ENCODE measurements at regions of chr17 and their contacts with region 1.

Region 1: DNA sequence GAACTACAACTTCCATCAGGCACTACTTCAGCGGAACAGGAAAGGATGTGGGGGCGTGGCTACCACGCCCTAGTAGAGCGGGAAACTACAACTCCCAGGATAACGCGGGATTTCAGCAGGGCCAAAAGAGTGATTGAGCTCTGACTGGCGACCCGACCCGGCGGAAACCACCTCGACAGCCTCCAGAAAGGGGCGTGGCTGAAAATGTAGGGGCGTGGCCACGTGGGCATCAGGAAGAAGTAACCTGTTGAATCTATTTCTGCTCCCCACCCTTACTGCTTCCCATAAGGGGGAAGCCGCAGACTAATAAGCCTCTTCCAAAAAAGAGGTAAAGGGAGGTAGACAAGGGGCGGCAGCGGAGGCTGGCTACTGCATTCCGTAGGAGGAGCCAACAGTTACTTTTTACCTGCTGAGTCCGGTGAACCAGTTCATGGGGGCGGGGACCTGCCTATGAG is at the start of gene TMEM102:
- DNase-seq: peak; percentile 99
- ATAC-seq: peak; percentile 81
- H3K4me3 Mint-ChIP-seq: peak within 1 kb of the TSS; percentile 86
- H3K27ac Mint-ChIP-seq: peak within 1 kb of the TSS; percentile 97
- H3K4me1 Mint-ChIP-seq: peaks cover 42% of the 10 kb centered on the region
- H3K27me3 Mint-ChIP-seq: peaks cover 12% of the 10 kb centered on the region
- total RNA-seq, gene TMEM102: 13.9 to 16.7 TPM

Region 2: GRCh38 chr17:7177196-7177953 is 257.9 kb before region 1 on chr17:
- CTCF ChIA-PET with region 1: no interaction called
- DNase-seq: peak; percentile 75
- ATAC-seq: peak; percentile 73
- H3K4me3 Mint-ChIP-seq: peak overlapping the region; percentile 53
- H3K27ac Mint-ChIP-seq: no peak overlapping the region
- H3K4me1 Mint-ChIP-seq: peaks cover 9% of the 10 kb centered on the region
- H3K27me3 Mint-ChIP-seq: peaks cover 14% of the 10 kb centered on the region

Region 3: DNA sequence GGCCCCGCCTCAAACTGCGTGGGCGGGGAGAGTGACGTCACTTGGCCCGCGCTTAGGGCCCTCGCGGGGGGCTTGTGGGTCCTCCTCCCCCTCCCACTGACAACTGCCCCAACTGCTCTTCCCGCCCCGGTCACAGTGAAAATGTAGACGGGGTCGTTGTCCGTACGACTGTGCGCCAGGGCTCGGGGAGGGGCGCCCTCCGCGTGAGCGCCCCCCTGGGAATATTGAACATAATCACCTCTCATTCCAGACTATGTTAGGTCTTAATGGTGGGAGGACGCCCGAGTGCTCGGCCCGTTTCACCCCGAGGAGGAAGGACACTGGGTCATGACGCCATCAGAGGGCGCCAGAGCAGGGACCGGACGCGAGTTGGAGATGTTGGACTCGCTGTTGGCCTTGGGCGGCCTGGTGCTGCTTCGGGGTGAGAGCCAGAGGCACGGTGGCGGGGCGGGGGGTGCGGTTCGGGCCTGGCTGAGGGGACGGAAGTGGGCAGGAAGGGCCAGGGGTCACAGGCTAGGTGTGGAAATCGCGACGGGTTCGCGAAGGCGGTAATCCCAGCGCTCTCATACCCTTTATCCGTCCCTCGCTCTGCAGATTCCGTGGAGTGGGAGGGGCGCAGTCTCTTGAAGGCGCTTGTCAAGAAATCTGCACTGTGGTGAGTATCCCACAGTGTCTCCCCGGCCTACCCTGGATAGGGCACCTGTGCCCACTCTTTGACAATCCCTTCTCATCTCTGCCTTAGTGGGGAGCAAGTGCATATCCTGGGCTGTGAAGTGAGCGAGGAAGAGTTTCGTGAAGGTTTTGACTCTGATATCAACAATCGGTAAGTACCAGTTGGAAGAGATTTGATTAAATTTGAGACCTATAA is 182.8 kb before region 1 on chr17 and contains the start of gene ELP5:
- CTCF ChIA-PET with region 1: no interaction called
- DNase-seq: peak; percentile 96
- ATAC-seq: peak; percentile 73
- H3K4me3 Mint-ChIP-seq: peak within 1 kb of the TSS; percentile 91
- H3K27ac Mint-ChIP-seq: peak within 1 kb of the TSS; percentile 99
- H3K4me1 Mint-ChIP-seq: peaks cover 41% of the 10 kb centered on the region
- H3K27me3 Mint-ChIP-seq: no peaks in the 10 kb centered on the region
- total RNA-seq, gene ELP5: 56.5 to 70.4 TPM

Region 4: GRCh38 chr17:7336240-7337175 is 98.7 kb before region 1 on chr17 and contains the start of gene ACAP1:
- CTCF ChIA-PET with region 1: interaction called, 15 read pairs
- DNase-seq: peak; percentile 96
- ATAC-seq: peak; percentile 95
- H3K4me3 Mint-ChIP-seq: peak within 1 kb of the TSS; percentile 93
- H3K27ac Mint-ChIP-seq: peak within 1 kb of the TSS; percentile 96
- H3K4me1 Mint-ChIP-seq: peaks cover 48% of the 10 kb centered on the region
- H3K27me3 Mint-ChIP-seq: no peaks in the 10 kb centered on the region
- total RNA-seq, gene ACAP1: 594 to 712 TPM

Region 5: DNA sequence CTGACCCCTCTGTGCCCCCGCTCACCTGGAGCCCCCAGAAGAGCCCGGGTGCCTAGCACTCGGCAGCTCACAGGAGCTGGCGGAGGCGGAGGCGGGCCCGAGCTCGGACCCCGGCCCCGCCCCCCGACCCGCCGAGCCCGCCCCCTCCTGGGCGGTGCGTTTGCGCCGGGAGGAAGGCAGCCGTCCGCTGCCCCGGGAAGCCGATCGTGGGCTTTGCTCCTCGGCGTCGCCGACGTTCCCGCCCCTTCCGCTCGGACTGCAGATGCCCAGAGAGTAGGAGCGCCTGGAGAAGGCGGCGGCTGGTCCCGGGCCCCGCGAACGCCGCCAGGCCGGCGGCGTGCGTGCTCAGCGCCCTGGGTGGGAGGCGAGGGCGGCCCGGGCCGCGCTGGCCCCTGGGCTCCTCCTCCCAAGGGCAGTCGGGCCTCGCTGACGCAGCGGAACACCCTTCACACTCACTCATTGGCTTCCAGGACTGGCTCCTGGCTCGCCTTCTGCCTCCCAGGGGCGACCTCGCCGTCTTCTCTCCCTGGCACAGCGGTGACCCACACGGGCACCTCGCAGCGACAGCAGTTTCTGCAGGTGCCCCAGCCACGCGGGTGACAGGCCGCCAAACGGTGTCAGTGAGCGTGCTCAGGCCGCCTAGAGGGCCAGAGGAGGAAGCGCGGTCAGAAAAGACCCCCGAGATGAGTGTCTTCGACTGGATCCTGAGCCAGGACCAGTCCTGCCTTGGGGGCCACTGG is 40.6 kb before region 1 on chr17 and contains the start of gene PLSCR3:
- CTCF ChIA-PET with region 1: interaction called, 16 read pairs
- DNase-seq: peak; percentile 86
- ATAC-seq: peak; percentile 92
- H3K4me3 Mint-ChIP-seq: peak within 1 kb of the TSS; percentile 94
- H3K27ac Mint-ChIP-seq: peak within 1 kb of the TSS; percentile 85
- H3K4me1 Mint-ChIP-seq: peaks cover 18% of the 10 kb centered on the region
- H3K27me3 Mint-ChIP-seq: no peaks in the 10 kb centered on the region
- total RNA-seq, gene PLSCR3: 65.5 to 74.2 TPM

Region 6: GRCh38 chr17:7454980-7455379 is 19.7 kb after region 1 on chr17:
- CTCF ChIA-PET with region 1: interaction called, 51 read pairs
- DNase-seq: no peak
- ATAC-seq: no peak
- H3K4me3 Mint-ChIP-seq: peak overlapping the region; percentile 99
- H3K27ac Mint-ChIP-seq: peak overlapping the region; percentile 99
- H3K4me1 Mint-ChIP-seq: peaks cover 23% of the 10 kb centered on the region
- H3K27me3 Mint-ChIP-seq: no peaks in the 10 kb centered on the region

Region 7: DNA sequence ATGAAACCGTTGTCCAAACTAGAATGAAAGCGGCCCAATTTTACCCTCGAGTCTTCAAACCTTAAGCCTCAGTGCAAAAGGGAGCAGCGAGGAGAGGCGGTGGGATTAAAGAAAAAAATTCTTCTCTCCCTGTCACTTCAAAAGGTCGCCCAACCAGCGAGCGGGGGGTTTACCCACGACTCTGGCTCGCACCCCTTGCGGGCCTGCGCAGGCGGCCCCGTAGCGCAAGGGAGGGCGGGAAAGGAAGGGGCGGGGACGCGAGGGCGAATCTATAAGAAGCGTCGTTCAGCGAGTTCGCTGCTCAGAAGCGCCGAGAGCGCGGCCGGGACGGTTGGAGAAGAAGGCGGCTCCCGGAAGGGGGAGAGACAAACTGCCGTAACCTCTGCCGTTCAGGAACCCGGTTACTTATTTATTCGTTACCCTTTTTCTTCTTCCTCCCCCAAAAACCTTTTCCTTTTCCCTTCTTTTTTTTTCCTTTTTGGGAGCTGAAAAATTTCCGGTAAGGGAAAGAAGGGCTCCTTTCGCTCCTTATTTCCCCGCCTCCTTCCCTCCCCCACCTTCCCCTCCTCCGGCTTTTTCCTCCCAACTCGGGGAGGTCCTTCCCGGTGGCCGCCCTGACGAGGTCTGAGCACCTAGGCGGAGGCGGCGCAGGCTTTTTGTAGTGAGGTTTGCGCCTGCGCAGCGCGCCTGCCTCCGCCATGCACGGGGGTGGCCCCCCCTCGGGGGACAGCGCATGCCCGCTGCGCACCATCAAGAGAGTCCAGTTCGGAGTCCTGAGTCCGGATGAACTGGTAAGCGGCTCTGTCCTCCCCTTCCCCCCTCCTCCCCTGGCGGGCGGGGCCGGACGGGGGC is 49.0 kb after region 1 on chr17 and contains the start of gene POLR2A:
- CTCF ChIA-PET with region 1: interaction called, 41 read pairs
- DNase-seq: peak; percentile 98
- ATAC-seq: peak; percentile 69
- H3K4me3 Mint-ChIP-seq: peak within 1 kb of the TSS; percentile 90
- H3K27ac Mint-ChIP-seq: peak within 1 kb of the TSS; percentile 100
- H3K4me1 Mint-ChIP-seq: peaks cover 67% of the 10 kb centered on the region
- H3K27me3 Mint-ChIP-seq: no peaks in the 10 kb centered on the region
- total RNA-seq, gene POLR2A: 198 to 228 TPM

Region 8: DNA sequence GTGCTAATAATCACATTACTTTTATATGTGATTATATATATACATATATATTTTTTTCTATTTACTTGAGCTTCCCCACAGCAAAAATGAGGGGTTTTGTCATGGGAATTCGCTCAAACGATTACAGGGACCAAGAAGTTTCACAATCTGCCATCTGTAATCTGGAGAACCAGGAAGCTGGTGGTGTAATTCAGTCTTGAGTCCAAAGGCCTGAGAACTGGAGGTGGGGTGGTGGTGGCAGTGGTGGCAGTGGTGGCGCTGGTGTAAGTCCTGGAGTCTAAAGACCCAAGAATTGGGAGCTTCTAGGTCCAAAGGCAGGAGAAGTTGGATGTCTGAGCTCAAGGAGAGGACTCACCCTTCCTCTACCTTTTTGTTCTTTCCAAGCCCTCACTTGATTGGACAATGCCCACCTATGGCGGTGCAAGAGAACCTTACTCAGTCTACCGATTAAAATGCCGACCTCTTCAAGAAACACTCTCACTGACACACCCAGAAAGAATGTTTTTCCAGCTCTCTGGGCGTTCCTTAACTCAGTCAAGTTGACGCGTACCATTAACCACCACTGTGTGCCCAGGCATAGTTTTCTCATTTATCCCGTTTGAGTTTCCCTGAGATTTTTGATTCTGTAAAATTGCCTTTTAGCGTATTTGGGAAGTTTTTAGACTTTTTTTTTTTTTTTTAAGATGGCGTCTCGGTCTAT is 80.8 kb after region 1 on chr17:
- CTCF ChIA-PET with region 1: interaction called, 10 read pairs
- DNase-seq: no peak
- ATAC-seq: no peak
- H3K4me3 Mint-ChIP-seq: no peak overlapping the region
- H3K27ac Mint-ChIP-seq: no peak overlapping the region
- H3K4me1 Mint-ChIP-seq: no peaks in the 10 kb centered on the region
- H3K27me3 Mint-ChIP-seq: no peaks in the 10 kb centered on the region

Region 9: DNA sequence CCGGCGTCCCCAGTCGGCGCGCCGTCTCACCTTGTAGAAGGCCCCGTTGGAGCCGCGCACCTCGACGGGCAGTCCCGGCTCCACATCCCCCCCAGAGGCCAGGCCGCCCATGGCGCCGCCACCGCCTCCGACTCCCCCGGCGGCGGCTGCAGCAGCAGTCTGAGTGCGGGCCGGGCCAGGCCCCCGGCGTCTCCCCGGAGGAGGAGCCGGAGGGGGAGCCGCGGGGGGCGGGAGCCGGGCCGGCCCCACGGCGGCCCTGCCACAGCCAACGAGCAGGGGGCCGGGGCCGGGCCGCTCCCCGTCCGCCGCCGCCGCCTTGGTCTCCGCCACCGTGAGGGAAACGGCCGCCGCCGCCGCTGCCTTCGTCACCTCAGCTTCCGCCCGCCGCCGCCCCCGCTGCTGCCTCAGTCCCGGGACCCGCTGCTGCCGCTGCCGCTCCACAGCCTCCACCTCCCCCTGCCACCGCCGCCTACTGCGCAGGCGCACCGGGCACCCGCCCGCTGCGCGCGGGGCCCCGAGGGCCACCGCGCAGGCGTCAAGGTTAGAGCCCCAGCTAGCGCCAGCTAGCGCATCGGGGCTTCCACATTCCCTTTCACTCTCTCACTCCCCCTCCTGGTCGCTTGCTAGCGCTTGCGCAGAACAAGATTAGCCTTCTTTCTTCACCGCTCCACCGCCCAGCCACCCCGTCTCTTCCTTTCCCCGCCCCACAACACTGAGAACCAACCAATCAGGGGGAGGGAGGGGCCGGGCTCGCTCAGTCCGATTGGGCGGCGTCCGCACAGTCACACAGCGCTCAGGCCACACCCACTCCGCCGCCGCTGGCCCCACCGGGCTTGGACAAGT is 179.4 kb after region 1 on chr17 and contains the start of gene FXR2:
- CTCF ChIA-PET with region 1: interaction called, 10 read pairs
- DNase-seq: peak; percentile 100
- ATAC-seq: peak; percentile 95
- H3K4me3 Mint-ChIP-seq: peak within 1 kb of the TSS; percentile 77
- H3K27ac Mint-ChIP-seq: peak within 1 kb of the TSS; percentile 87
- H3K4me1 Mint-ChIP-seq: peaks cover 30% of the 10 kb centered on the region
- H3K27me3 Mint-ChIP-seq: no peaks in the 10 kb centered on the region
- total RNA-seq, gene FXR2: 30.7 to 40.5 TPM

Region 10: DNA sequence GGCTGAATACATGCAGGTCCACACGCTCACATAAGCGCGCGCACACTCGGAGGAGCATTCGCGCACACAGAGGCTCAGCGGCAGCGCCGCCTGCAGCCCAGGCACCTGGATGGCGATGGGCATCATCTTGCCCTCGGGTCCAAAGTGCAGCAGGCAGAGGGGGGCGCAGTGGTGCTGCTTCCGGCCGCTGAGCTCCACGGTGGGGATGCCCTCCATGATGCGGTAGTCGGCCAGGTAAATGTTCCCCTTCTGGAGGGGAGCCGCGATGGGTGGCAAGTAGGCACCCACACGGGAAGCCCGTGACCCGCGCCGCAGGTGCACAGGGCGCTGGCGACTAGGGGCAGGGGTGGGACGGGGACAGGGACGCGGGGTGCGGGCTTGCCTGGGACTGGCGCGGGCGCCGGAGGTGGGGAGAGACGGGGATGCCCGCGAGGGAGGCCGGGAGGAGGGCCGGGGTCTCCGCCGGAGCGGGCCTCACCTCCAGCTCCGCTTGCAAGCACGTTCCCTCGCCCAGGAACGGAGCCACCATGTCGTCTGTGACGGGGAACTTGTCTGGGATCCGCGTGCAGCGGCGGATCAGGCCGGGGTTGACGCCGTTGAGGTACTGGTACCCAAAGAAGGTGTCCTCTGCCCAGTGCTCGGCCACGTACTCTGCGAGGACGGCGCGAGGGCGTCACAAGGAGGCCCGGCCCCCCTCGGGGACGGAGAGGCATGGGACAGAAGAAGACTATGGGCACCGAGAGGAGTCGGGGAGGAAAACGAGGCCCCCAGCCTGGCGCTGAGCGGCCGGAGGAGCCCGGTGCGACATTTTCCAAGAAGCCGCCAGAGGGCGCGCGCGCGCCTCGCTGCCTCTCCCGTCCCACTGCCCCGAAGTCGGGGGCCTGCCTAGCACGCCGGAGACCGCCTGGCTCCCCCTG is 644.3 kb after region 1 on chr17:
- CTCF ChIA-PET with region 1: no interaction called
- DNase-seq: peak; percentile 85
- ATAC-seq: peak; percentile 86
- H3K4me3 Mint-ChIP-seq: peak overlapping the region; percentile 87
- H3K27ac Mint-ChIP-seq: peak overlapping the region; percentile 81
- H3K4me1 Mint-ChIP-seq: peaks cover 12% of the 10 kb centered on the region
- H3K27me3 Mint-ChIP-seq: peaks cover 20% of the 10 kb centered on the region

Measured in activated CD8-positive, alpha-beta memory T cell treated with anti-CD3 and anti-CD28 coated beads, Interleukin-2, amount 10 ng/mL, durations not matched to agents 7 days and 5 days (primary cell).